B cell (primary cell): ENCODE measurements at regions of chr2 and their contacts with region 1.

Region 1: DNA sequence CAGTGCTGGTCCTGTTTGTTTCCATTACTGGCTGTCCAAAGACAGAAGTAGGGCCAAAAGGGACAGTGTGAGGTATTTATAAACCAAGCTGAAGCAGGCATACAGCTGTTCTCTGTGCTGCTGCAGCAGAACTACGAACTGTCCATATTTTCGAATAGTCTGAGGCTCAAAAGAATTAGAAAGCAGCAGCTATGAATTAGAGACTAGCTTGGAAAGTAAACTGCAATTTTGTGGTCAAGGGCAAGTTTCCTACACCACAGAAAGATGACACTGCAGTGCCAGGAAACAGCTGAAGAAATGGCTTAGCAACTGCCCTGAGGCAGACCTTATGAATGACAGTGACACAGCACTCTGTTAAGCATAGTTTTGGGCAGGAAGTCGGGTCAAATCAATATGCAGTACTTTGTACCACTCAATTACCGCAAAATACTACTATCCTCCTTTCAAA is 125.3 kb downstream of the TMEM131 start:
- DNase-seq: peak; percentile 35
- ATAC-seq: peak; percentile 62
- H3K4me3 ChIP-seq: no peak overlapping the region
- H3K4me3 Mint-ChIP-seq: no peak overlapping the region
- H3K27ac ChIP-seq: no peak overlapping the region
- H3K27ac Mint-ChIP-seq: no peak overlapping the region
- H3K4me1 ChIP-seq: peaks cover 30 to 31% of the 10 kb centered on the region in 2 donors
- H3K4me1 Mint-ChIP-seq: peaks cover 58% of the 10 kb centered on the region
- H3K27me3 ChIP-seq: no peaks in the 10 kb centered on the region
- H3K27me3 Mint-ChIP-seq: no peaks in the 10 kb centered on the region
- CTCF ChIP-seq: no peak

Region 2: DNA sequence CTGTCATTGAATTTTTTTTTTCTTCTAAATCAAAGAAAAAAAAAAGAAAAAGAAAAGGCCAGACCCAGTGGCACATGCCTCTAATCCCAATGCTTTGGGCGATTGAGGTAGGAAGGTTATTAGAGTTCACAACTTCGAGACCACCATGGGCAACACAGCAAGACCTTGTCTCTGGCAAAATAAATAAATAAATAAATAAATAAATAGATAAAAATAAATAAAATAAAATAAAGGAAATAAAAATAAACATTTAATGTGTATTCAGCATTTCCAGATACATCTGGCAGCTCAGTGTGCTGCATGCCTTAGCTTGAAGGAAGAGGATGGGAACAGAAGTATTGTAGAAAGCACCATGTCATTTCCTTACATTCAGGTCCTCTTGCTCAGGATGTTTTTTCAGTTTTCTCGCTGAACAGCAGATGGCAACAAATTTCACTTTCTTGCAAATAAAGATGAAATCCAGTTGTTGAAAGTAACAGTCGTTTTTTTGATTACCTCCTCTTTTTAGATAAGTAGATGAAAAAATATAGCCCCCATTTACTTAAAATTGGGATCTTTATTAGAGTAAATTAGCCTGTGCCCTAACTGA is 858.3 kb before region 1 on chr2:
- CTCF ChIA-PET with region 1: no interaction called
- POLR2A ChIA-PET with region 1: no interaction called
- intact Hi-C with region 1: no loop called
- DNase-seq: peak; percentile 78
- ATAC-seq: no peak
- H3K4me3 ChIP-seq: no peak overlapping the region
- H3K4me3 Mint-ChIP-seq: no peak overlapping the region
- H3K27ac ChIP-seq: no peak overlapping the region
- H3K27ac Mint-ChIP-seq: no peak overlapping the region
- H3K4me1 ChIP-seq: no peaks in the 10 kb centered on the region
- H3K4me1 Mint-ChIP-seq: no peaks in the 10 kb centered on the region
- H3K27me3 ChIP-seq: peaks cover 0 to 4% (median 0%) of the 10 kb centered on the region in 4 experiments
- H3K27me3 Mint-ChIP-seq: peaks cover 32% of the 10 kb centered on the region
- CTCF ChIP-seq: peak; percentile 73

Region 3: DNA sequence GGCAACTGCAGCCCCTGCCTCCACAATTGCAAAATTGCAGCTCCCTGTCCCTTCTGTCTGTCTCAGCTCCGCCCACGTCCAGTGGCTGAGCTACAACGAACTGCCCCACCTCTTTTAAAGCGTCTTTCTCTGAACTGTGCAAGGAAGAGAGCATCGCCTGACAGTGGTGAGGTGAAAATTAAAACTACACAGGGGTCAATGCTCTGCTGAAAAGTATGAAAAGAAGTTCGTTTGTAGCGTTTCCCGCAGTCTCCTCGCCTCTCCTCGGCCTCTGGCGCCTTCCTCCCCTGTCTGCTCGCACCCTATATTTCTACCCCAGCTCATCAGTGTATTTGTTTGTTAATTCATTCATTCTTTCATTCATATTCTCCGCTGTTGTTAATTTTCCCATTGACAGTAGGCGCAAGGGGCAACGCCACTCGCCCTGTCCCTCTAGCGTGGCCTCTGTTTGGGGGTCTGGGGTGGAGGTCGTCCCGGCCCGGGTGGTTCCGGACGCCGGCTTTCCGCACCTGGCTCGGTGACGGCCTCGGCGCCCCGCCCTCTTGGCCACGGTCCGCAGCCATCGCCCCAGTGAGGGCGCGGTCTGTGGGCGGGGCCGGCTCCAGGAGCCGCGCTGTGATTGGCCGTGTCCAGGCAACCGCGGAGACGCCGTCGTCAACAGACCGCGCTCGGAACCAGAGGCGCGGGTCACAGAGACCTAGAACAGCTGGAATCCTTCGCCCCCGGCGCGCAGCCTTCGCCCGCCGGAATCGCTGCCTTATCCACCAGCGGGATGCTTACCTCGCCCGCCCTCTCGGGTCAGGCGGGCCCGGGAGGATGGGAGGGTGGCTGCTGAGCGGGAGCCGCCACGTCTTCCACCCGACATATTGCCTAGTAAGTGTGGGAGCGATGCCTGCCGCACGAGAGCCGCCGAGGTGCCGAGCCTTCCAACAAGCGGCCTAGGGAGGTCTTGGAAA is 216.3 kb after region 1 on chr2 and contains the start of gene VWA3B:
- CTCF ChIA-PET with region 1: no interaction called
- POLR2A ChIA-PET with region 1: no interaction called
- intact Hi-C with region 1: loop called (anchors 10 kb)
- DNase-seq: peak; percentile 90
- ATAC-seq: peak; percentile 92
- H3K4me3 ChIP-seq: peak within 1 kb of the TSS; percentile 55 to 67 (median 57)
- H3K4me3 Mint-ChIP-seq: peak within 1 kb of the TSS; percentile 79
- H3K27ac ChIP-seq: peak within 1 kb of the TSS; percentile 33 to 54
- H3K27ac Mint-ChIP-seq: peak within 1 kb of the TSS; percentile 75
- H3K4me1 ChIP-seq: peaks cover 29 to 49% of the 10 kb centered on the region in 2 donors
- H3K4me1 Mint-ChIP-seq: peaks cover 47% of the 10 kb centered on the region
- H3K27me3 ChIP-seq: no peaks in the 10 kb centered on the region
- H3K27me3 Mint-ChIP-seq: no peaks in the 10 kb centered on the region
- CTCF ChIP-seq: no peak
- total RNA-seq, gene VWA3B: not detected in 2 replicates

Region 4: GRCh38 chr2:98175811-98176210 is 305.4 kb after region 1 on chr2:
- CTCF ChIA-PET with region 1: no interaction called
- POLR2A ChIA-PET with region 1: no interaction called
- intact Hi-C with region 1: loop called (anchors 5 kb)
- DNase-seq: peak; percentile 55
- ATAC-seq: peak; percentile 61
- H3K4me3 ChIP-seq: no peak overlapping the region
- H3K4me3 Mint-ChIP-seq: no peak overlapping the region
- H3K27ac ChIP-seq: no peak overlapping the region
- H3K27ac Mint-ChIP-seq: no peak overlapping the region
- H3K4me1 ChIP-seq: peaks cover 0 to 5% of the 10 kb centered on the region in 2 donors
- H3K4me1 Mint-ChIP-seq: peaks cover 7% of the 10 kb centered on the region
- H3K27me3 ChIP-seq: peaks cover 0 to 10% (median 5%) of the 10 kb centered on the region in 4 experiments
- H3K27me3 Mint-ChIP-seq: peaks cover 20% of the 10 kb centered on the region
- CTCF ChIP-seq: peak; percentile 34

Region 5: DNA sequence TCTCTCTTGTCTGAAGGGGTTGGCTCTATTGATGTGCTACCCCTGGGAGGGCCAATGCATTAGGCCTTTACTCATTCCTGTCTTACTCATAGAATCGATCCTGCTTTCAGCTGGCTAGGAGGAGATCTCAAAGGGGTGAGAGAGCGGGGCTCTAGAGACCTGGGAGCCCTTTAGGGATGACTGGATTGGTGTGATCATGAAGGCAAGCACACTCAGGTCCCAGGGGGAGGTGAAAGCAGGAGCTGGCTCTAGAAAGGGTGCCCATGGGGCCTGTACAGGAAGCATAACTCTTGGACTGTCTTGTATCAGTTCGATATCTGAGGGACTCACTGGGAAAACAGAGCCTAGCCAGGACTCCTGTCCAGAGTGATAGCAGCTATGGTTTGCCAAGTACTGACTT is 622.0 kb after region 1 on chr2:
- CTCF ChIA-PET with region 1: no interaction called
- POLR2A ChIA-PET with region 1: no interaction called
- intact Hi-C with region 1: no loop called
- DNase-seq: no peak
- ATAC-seq: no peak
- H3K4me3 ChIP-seq: no peak overlapping the region
- H3K4me3 Mint-ChIP-seq: no peak overlapping the region
- H3K27ac ChIP-seq: no peak overlapping the region
- H3K27ac Mint-ChIP-seq: no peak overlapping the region
- H3K4me1 ChIP-seq: peaks cover 0 to 3% of the 10 kb centered on the region in 2 donors
- H3K4me1 Mint-ChIP-seq: peaks cover 15% of the 10 kb centered on the region
- H3K27me3 ChIP-seq: no peaks in the 10 kb centered on the region
- H3K27me3 Mint-ChIP-seq: no peaks in the 10 kb centered on the region
- CTCF ChIP-seq: no peak